Gastrocnemius medialis (tissue), 4 donors: ENCODE measurements at regions of chr20 and their contacts with region 1.

Region 1: GRCh38 chr20:36050436-36051317 is 82.3 kb downstream of the CNBD2 start:
- DNase-seq: peak; percentile 82 to 89
- ATAC-seq: peak; percentile 98
- H3K4me3 ChIP-seq: peak overlapping the region; percentile 95 to 100 (median 98)
- H3K27ac ChIP-seq: peak overlapping the region; percentile 96 to 100 (median 98)
- H3K4me1 ChIP-seq: peaks cover 21 to 28% of the 10 kb centered on the region in 2 donors
- H3K27me3 ChIP-seq: no peaks in the 10 kb centered on the region
- CTCF ChIP-seq: no peak
- POLR2A ChIP-seq: peak; percentile 97 to 99

Region 2: DNA sequence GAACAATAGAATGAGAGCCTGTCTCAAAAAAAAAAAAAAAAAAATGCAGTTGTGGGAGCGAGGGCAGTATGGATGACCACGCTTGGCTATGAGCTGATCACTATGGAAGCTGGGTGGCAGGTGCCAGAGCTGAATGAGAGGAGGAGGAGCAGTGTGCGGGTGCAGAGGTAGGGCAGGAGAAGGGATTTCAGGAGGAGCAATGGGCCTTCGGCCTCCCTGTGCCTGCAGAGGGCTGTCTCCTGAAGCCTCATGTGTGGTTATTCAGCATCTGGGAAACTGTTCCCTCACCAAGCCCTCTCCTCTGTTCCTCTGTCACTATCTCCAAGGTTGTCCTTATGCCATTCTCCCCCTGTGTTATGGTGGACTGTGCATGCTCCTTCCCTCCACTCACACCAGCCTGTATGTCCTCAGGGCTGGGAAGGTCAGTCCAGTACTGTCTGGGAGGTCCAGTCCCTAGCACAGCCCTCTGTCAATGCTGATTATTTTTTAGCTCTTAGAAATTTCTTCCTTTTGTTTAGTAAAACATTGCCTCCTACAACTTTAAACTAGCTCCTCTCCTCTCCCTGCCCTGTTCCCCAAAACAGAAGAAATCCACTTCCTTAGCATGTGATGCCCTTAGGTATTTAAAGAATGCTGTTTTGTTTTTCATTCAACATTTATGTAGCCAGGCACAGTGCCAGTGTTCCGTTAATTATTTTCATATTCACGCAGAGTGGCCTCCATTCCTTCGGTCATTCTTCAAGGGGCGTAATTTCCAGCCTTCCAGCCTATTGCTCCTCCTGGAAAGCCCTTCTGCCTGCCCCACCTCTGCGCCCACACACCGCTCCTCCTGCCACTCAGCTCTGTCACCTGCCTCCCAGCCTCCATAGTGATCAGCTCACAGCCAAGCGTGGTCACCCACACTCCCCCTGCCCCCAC is 33.4 kb before region 1 on chr20:
- in situ Hi-C with region 1: no loop called
- intact Hi-C with region 1: no loop called
- DNase-seq: no peak
- ATAC-seq: no peak
- H3K4me3 ChIP-seq: no peak overlapping the region
- H3K27ac ChIP-seq: no peak overlapping the region
- H3K4me1 ChIP-seq: no peaks in the 10 kb centered on the region
- H3K27me3 ChIP-seq: no peaks in the 10 kb centered on the region
- CTCF ChIP-seq: no peak
- POLR2A ChIP-seq: no peak

Region 3: GRCh38 chr20:36064658-36065426 is 14.2 kb after region 1 on chr20:
- in situ Hi-C with region 1: no loop called
- intact Hi-C with region 1: loop called (anchors 1 kb)
- DNase-seq: peak; percentile 87 to 93
- ATAC-seq: peak; percentile 95 to 97
- H3K4me3 ChIP-seq: peak overlapping the region; percentile 65 to 95 (median 68)
- H3K27ac ChIP-seq: peak overlapping the region; percentile 89 to 91 (median 91)
- H3K4me1 ChIP-seq: no peaks in the 10 kb centered on the region
- H3K27me3 ChIP-seq: no peaks in the 10 kb centered on the region
- CTCF ChIP-seq: peak in 1 of 5 experiments; percentile 16
- POLR2A ChIP-seq: peak; percentile 75 to 87

Region 4: GRCh38 chr20:36092398-36093024 is 41.8 kb after region 1 on chr20:
- in situ Hi-C with region 1: no loop called
- intact Hi-C with region 1: loop called (anchors 1 kb)
- DNase-seq: no peak
- ATAC-seq: peak; percentile 53 to 55
- H3K4me3 ChIP-seq: peak overlapping the region; percentile 55 to 65 (median 57)
- H3K27ac ChIP-seq: no peak overlapping the region
- H3K4me1 ChIP-seq: peaks cover 5 to 12% of the 10 kb centered on the region in 2 donors
- H3K27me3 ChIP-seq: peaks cover 35 to 39% (median 37%) of the 10 kb centered on the region in 3 donors
- CTCF ChIP-seq: no peak
- POLR2A ChIP-seq: no peak